ENCODE measurements at regions of chr14 and their contacts with region 1.

Region 1: GRCh38 chr14:54566410-54567223 is at the start of gene SAMD4A:
- DNase-seq: peak; percentile 32 to 68 (median 53)
- ATAC-seq: peak; percentile 46
- H3K4me3 ChIP-seq: peak within 1 kb of the TSS; percentile 74
- H3K4me3 Mint-ChIP-seq: peak within 1 kb of the TSS; percentile 91 to 97 (median 94)
- H3K27ac ChIP-seq: peak within 1 kb of the TSS; percentile 56
- H3K27ac Mint-ChIP-seq: peak within 1 kb of the TSS in 8 of 9 donors; percentile 28 to 92 (median 66)
- H3K4me1 ChIP-seq: peaks cover 9 to 11% of the 10 kb centered on the region in 2 donors
- H3K4me1 Mint-ChIP-seq: peaks cover 5 to 19% (median 14%) of the 10 kb centered on the region in 7 donors
- H3K27me3 ChIP-seq: peaks cover 0 to 12% of the 10 kb centered on the region in 2 donors
- H3K27me3 Mint-ChIP-seq: peaks cover 0 to 51% (median 6%) of the 10 kb centered on the region in 5 donors
- total RNA-seq, gene SAMD4A: 0.73 to 5.7 (median 1.7) TPM

Region 2: DNA sequence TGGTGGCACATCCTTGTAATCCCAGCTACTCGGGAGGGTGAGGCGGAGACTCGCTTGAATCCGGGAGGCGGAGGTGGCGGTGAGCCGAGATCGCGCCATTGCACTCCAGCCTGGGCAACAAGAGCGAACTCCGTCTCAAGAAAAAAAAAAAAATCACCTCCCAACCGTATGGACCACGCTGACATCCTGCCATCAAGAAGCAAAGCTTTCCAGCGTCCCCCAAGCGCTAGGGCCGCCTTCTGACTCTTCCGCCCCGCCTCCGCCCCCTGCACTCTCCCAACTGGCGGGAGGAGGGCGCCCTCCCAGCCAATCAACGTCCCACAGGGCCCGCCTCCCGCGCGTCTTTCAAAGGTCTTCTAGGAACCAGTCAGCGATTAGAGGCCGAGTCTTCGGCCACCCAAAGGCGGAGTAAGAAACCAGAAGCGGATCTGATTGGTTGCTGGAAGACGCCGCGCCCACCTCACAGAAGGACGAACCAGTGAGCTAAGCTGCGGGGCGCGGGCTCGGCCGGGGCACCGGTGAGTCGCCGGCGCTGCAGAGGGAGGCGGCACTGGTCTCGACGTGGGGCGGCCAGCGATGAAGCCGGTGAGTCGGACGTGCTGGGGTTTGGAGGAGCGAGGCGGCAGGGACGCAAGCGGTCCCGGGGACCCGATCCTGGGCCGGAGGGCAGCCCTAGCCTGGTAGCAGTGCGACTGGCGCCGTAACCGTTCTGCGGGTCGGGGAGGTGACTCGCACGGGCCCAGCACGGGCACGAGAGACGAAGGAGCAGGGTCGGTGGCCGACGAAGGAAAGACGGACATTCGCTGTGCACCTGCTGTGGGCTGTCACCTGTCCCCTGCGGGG is 169.9 kb before region 1 on chr14 and contains the start of gene CDKN3:
- CTCF ChIA-PET with region 1: no interaction called
- POLR2A ChIA-PET with region 1: no interaction called
- intact Hi-C with region 1: loop called (anchors 1 kb)
- DNase-seq: peak; percentile 91 to 96 (median 95)
- ATAC-seq: peak; percentile 98
- H3K4me3 ChIP-seq: peak within 1 kb of the TSS; percentile 85
- H3K4me3 Mint-ChIP-seq: peak within 1 kb of the TSS; percentile 81 to 96 (median 90)
- H3K27ac ChIP-seq: peak within 1 kb of the TSS; percentile 46
- H3K27ac Mint-ChIP-seq: peak within 1 kb of the TSS; percentile 24 to 93 (median 83)
- H3K4me1 ChIP-seq: peaks cover 0 to 9% of the 10 kb centered on the region in 2 donors
- H3K4me1 Mint-ChIP-seq: peaks cover 0 to 38% (median 12%) of the 10 kb centered on the region in 7 donors
- H3K27me3 ChIP-seq: no peaks in the 10 kb centered on the region
- H3K27me3 Mint-ChIP-seq: peaks cover 0 to 2% (median 0%) of the 10 kb centered on the region in 5 donors
- total RNA-seq, gene CDKN3: 0.93 to 48.1 (median 3.0) TPM

Region 3: DNA sequence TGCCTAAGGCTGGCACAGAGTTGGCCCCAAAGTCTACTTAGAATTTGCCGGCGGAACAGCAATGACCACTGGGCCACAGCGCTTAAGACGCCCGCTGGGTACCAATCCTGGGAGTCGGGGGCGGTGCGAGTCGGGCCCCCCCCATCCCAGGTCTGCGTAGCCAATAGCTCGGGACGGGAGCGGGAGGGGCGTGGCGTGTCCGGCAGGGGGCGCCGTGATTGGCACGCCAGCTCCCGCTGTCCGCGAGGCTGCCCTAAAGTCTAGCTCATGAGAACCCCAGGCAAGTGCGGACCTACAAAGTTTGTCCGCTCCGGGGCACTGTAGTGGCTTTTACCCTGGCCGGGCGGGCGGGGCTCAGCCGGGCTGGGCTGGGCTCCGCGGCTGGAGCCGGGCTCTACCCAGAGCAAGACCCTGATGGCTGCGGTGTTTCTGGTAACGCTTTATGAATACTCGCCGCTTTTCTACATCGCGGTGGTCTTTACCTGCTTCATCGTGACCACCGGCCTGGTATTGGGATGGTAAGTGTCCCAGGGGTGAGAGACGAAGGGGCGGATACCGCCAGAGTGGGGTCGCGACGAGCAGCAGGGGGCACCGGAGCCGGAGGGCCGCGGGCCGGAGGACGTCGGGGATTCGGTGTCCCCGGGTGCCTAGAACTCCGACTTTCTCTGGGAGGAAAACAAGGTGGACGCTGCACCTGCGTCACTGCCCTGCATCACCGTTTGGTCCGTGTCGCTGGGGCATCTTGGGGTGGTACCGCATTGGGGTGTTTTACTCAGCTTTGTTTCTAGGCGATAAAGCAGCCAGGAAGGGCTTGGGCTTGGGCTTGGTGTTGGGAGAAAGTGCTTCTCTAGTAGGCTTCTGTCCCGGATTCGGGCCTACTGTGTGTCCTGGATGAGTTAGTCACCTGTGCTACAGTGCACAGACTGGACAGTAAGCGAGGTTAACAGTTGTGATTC is 56.8 kb before region 1 on chr14 and contains the start of gene CGRRF1:
- CTCF ChIA-PET with region 1: interaction called, 3 read pairs
- POLR2A ChIA-PET with region 1: interaction called, 3 read pairs
- intact Hi-C with region 1: loop called (anchors 1 kb)
- DNase-seq: peak; percentile 86 to 98 (median 89)
- ATAC-seq: peak; percentile 99
- H3K4me3 ChIP-seq: peak within 1 kb of the TSS; percentile 93
- H3K4me3 Mint-ChIP-seq: peak within 1 kb of the TSS; percentile 87 to 99 (median 96)
- H3K27ac ChIP-seq: peak within 1 kb of the TSS; percentile 72
- H3K27ac Mint-ChIP-seq: peak within 1 kb of the TSS; percentile 85 to 93 (median 89)
- H3K4me1 ChIP-seq: peaks cover 11% of the 10 kb centered on the region in 2 donors
- H3K4me1 Mint-ChIP-seq: peaks cover 20 to 56% (median 53%) of the 10 kb centered on the region in 7 donors
- H3K27me3 ChIP-seq: no peaks in the 10 kb centered on the region
- H3K27me3 Mint-ChIP-seq: peaks cover 0 to 10% (median 0%) of the 10 kb centered on the region in 5 donors
- total RNA-seq, gene CGRRF1: 11.2 to 24.1 (median 17.3) TPM

Region 4: DNA sequence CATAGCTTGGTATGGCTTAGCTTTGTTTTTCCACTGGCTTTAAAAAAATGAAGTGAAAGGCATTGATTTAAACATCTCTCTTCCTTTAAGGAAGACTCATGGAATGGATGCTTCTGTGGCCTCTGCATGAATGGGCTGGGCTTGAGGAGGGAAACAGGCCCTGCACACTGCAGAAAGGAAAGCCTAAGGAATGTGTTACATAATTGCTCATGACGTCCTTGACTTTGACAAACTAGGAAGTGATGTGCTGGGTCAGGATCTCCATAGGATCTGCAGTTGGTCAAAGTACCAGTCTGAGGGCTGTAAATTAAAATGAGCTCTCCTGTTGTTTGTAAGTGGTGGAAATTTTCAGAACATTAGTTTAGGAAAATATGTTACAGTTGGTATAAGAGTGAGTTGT is 13.0 kb after region 1 on chr14:
- CTCF ChIA-PET with region 1: no interaction called
- POLR2A ChIA-PET with region 1: no interaction called
- intact Hi-C with region 1: no loop called
- DNase-seq: no peak
- ATAC-seq: no peak
- H3K4me3 ChIP-seq: no peak overlapping the region
- H3K4me3 Mint-ChIP-seq: no peak overlapping the region
- H3K27ac ChIP-seq: no peak overlapping the region
- H3K27ac Mint-ChIP-seq: no peak overlapping the region
- H3K4me1 ChIP-seq: no peaks in the 10 kb centered on the region
- H3K4me1 Mint-ChIP-seq: no peaks in the 10 kb centered on the region
- H3K27me3 ChIP-seq: no peaks in the 10 kb centered on the region
- H3K27me3 Mint-ChIP-seq: peaks cover 0 to 19% (median 10%) of the 10 kb centered on the region in 5 donors

Region 5: DNA sequence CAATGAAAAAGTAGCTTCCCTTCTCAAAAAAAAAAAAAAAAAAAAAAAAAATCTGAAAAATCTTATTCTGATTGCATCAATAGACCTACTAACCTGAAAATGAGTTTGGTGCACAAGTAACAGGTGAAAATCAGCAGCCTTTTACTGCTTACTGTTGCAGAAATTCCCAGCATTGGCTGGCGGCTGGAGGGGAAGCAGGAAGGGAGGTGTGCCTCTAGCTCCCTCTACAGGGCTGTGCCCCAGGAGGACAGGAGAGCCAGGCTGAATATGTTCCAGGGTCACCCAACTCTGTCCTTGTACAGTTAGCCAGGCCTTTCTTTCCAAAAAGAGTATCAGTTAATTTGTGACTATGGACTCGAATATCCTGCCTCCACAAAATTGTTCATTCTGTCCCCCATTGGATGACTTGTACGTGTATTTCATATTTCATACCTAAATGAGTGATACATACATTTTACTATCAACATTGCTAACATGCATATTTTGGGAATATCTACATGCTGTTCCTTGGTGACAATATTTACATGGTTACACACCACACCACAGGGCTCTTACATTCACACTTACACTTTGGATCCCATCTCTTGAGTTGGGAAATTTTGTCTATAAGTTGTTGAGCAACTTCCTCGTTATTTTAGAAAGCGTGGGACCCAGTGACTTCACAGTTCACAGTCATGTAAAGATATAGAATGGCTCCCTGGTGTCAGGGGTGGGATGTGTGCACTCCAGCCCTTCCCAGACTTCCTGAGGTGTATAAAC is 125.1 kb after region 1 on chr14:
- CTCF ChIA-PET with region 1: interaction called, 7 read pairs
- POLR2A ChIA-PET with region 1: no interaction called
- intact Hi-C with region 1: loop called (anchors 1 kb)
- DNase-seq: peak in 5 of 9 donors; percentile 4 to 30 (median 24)
- ATAC-seq: peak; percentile 63
- H3K4me3 ChIP-seq: no peak overlapping the region
- H3K4me3 Mint-ChIP-seq: no peak overlapping the region
- H3K27ac ChIP-seq: no peak overlapping the region
- H3K27ac Mint-ChIP-seq: no peak overlapping the region
- H3K4me1 ChIP-seq: no peaks in the 10 kb centered on the region
- H3K4me1 Mint-ChIP-seq: peaks cover 0 to 19% (median 0%) of the 10 kb centered on the region in 7 donors
- H3K27me3 ChIP-seq: no peaks in the 10 kb centered on the region
- H3K27me3 Mint-ChIP-seq: peaks cover 11 to 29% (median 20%) of the 10 kb centered on the region in 5 donors

Region 6: GRCh38 chr14:54805521-54806322 is 239.1 kb after region 1 on chr14:
- CTCF ChIA-PET with region 1: interaction called, 6 read pairs
- POLR2A ChIA-PET with region 1: no interaction called
- intact Hi-C with region 1: loop called (anchors 1 kb)
- DNase-seq: peak; percentile 38 to 75 (median 56)
- ATAC-seq: peak; percentile 87
- H3K4me3 ChIP-seq: no peak overlapping the region
- H3K4me3 Mint-ChIP-seq: peak overlapping the region in 5 of 10 donors; percentile 20 to 58 (median 42)
- H3K27ac ChIP-seq: no peak overlapping the region
- H3K27ac Mint-ChIP-seq: peak overlapping the region in 1 of 9 donors; percentile 28
- H3K4me1 ChIP-seq: no peaks in the 10 kb centered on the region
- H3K4me1 Mint-ChIP-seq: peaks cover 0 to 6% (median 4%) of the 10 kb centered on the region in 7 donors
- H3K27me3 ChIP-seq: no peaks in the 10 kb centered on the region
- H3K27me3 Mint-ChIP-seq: peaks cover 10 to 27% (median 20%) of the 10 kb centered on the region in 5 donors

Region 7: DNA sequence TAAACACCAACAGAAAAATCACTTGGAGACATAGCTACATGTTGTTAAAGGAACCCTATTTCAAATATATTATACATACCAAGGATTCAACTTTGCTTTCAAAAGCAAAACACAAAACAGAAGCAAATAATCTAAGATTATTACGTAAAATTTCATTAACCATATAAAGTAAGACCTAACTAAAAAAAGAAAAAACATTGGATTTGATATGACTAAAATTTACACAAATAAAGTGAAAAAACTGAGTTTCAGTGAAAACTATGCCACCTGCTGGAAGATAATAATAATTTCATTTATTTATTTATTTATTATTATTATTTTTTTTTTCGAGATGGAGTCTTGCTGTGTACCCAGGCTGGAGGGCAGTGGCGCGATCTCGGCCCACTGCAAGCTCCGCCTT is 415.1 kb after region 1 on chr14:
- CTCF ChIA-PET with region 1: no interaction called
- POLR2A ChIA-PET with region 1: no interaction called
- intact Hi-C with region 1: loop called in 1 of 2 experiments (anchors 1 kb)
- DNase-seq: no peak
- ATAC-seq: no peak
- H3K4me3 ChIP-seq: no peak overlapping the region
- H3K4me3 Mint-ChIP-seq: no peak overlapping the region
- H3K27ac ChIP-seq: no peak overlapping the region
- H3K27ac Mint-ChIP-seq: no peak overlapping the region
- H3K4me1 ChIP-seq: no peaks in the 10 kb centered on the region
- H3K4me1 Mint-ChIP-seq: peaks cover 0 to 2% (median 0%) of the 10 kb centered on the region in 7 donors
- H3K27me3 ChIP-seq: no peaks in the 10 kb centered on the region
- H3K27me3 Mint-ChIP-seq: no peaks in the 10 kb centered on the region

Region 8: GRCh38 chr14:55354500-55354899 is 787.9 kb after region 1 on chr14:
- CTCF ChIA-PET with region 1: no interaction called
- POLR2A ChIA-PET with region 1: no interaction called
- intact Hi-C with region 1: loop called in 1 of 2 experiments (anchors 10 kb)
- DNase-seq: peak; percentile 25 to 79 (median 73)
- ATAC-seq: peak; percentile 95
- H3K4me3 ChIP-seq: peak overlapping the region; percentile 12
- H3K4me3 Mint-ChIP-seq: peak overlapping the region in 9 of 10 donors; percentile 48 to 85 (median 72)
- H3K27ac ChIP-seq: peak overlapping the region; percentile 66
- H3K27ac Mint-ChIP-seq: peak overlapping the region; percentile 72 to 96 (median 95)
- H3K4me1 ChIP-seq: peaks cover 0 to 9% of the 10 kb centered on the region in 2 donors
- H3K4me1 Mint-ChIP-seq: peaks cover 6 to 29% (median 21%) of the 10 kb centered on the region in 7 donors
- H3K27me3 ChIP-seq: no peaks in the 10 kb centered on the region
- H3K27me3 Mint-ChIP-seq: no peaks in the 10 kb centered on the region

Region 9: GRCh38 chr14:55411426-55412389 is 845.1 kb after region 1 on chr14 and contains the start of gene ATG14:
- CTCF ChIA-PET with region 1: no interaction called
- POLR2A ChIA-PET with region 1: no interaction called
- intact Hi-C with region 1: no loop called
- DNase-seq: peak; percentile 48 to 78 (median 66)
- ATAC-seq: peak; percentile 98
- H3K4me3 ChIP-seq: peak within 1 kb of the TSS; percentile 68
- H3K4me3 Mint-ChIP-seq: peak within 1 kb of the TSS; percentile 68 to 94 (median 92)
- H3K27ac ChIP-seq: peak within 1 kb of the TSS; percentile 86
- H3K27ac Mint-ChIP-seq: peak within 1 kb of the TSS; percentile 86 to 95 (median 90)
- H3K4me1 ChIP-seq: peaks cover 11 to 16% of the 10 kb centered on the region in 2 donors
- H3K4me1 Mint-ChIP-seq: peaks cover 26 to 56% (median 39%) of the 10 kb centered on the region in 7 donors
- H3K27me3 ChIP-seq: no peaks in the 10 kb centered on the region
- H3K27me3 Mint-ChIP-seq: peaks cover 0 to 5% (median 0%) of the 10 kb centered on the region in 5 donors
- total RNA-seq, gene ATG14: 7.8 to 19.6 (median 18.8) TPM

Measured in naive thymus-derived CD4-positive, alpha-beta T cell (primary cell).